ENCODE measurements at regions of chr16 and their contacts with region 1.

Region 1: DNA sequence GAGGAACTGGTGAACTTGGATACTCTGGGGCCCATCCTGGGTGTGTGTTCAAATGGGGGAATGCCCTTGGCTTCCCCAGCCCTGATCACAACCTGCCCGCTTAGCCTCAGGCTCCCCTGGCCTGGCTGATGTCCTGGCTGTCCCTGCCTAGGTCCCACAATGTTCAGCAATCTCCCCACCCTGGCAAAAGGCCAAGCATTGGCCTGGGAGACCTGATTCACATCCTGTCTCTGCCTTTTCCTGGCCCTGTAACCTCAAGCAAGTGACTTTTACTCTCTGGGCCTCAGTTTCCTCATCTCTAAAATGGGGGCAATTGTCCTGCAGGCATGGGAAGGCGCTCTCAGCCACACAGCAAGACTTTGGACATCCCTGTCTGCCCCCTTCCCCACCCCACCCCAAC is 14.4 kb downstream of the CPNE2 start:
- DNase-seq: no peak
- H3K4me3 ChIP-seq: no peak overlapping the region
- H3K27ac ChIP-seq: no peak overlapping the region
- H3K4me1 ChIP-seq: peaks cover 0 to 4% (median 0%) of the 10 kb centered on the region in 4 donors
- H3K27me3 ChIP-seq: no peaks in the 10 kb centered on the region
- CTCF ChIP-seq: no peak

Region 2: DNA sequence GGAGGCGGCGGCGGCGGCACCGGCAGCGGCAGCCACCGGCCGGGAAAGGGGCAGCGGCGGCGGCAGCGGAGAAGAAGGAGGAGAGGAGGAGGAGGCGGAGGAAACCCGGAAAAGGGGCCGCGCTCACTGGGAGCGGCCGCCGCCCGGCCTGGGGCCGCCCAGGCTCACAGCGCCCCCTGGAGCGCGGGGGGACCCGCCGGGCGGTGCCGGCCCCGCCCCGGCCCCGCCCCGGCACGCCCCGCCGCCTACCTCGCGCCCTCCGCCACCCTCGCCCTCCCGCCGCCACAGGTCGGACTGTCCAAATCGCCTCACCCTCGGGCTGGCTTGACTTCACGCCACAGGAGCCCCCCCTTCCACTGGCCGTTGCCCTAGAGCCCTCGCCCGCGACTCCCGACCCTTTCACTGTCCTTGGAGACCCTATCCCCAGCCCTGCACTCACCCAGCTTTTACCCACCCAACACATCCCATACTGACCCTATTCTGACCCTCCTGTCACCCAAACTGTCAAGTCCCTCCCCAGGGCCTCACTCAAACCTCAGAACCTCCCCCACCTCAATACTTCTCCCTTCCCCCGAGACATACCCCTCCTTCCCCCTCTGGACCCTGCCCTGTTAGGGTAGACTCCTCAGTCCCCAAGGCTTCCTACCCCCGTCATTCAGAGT is 1091.4 kb after region 1 on chr16 and contains the start of gene CSNK2A2:
- intact Hi-C with region 1: loop called (anchors 10 kb)
- DNase-seq: peak; percentile 41 to 81
- H3K4me3 ChIP-seq: peak within 1 kb of the TSS; percentile 68 to 86
- H3K27ac ChIP-seq: peak within 1 kb of the TSS; percentile 46 to 67
- H3K4me1 ChIP-seq: peaks cover 3 to 24% (median 16%) of the 10 kb centered on the region in 4 donors
- H3K27me3 ChIP-seq: peaks cover 0 to 12% of the 10 kb centered on the region in 2 donors
- CTCF ChIP-seq: peak; percentile 1 to 50

Measured in tibial artery (tissue), 4 donors.